ENCODE measurements at regions of chr16 and their contacts with region 1.

Region 1: GRCh38 chr16:46689365-46690280 is at the start of gene ORC6:
- DNase-seq: peak; percentile 94 to 95 (median 94)
- H3K4me3 ChIP-seq: peak within 1 kb of the TSS; percentile 77 to 87 (median 85)
- H3K4me3 Mint-ChIP-seq: no peak within 1 kb of the TSS
- H3K27ac ChIP-seq: peak within 1 kb of the TSS; percentile 94 to 96
- H3K27ac Mint-ChIP-seq: no peak within 1 kb of the TSS
- H3K4me1 ChIP-seq: peaks cover 39 to 47% of the 10 kb centered on the region in 2 donors
- H3K4me1 Mint-ChIP-seq: peaks cover 34% of the 10 kb centered on the region
- H3K27me3 ChIP-seq: no peaks in the 10 kb centered on the region
- H3K27me3 Mint-ChIP-seq: no peaks in the 10 kb centered on the region
- CTCF ChIP-seq: peak; percentile 53
- polyA plus RNA-seq, gene ORC6: 0.21 to 1.5 (median 0.31) TPM

Region 2: GRCh38 chr16:46789499-46790414 is 100.1 kb after region 1 on chr16:
- intact Hi-C with region 1: loop called (anchors 2 to 5 kb)
- DNase-seq: peak; percentile 53 to 70 (median 66)
- H3K4me3 ChIP-seq: peak overlapping the region; percentile 57 to 86 (median 71)
- H3K4me3 Mint-ChIP-seq: peak overlapping the region; percentile 78 to 90
- H3K27ac ChIP-seq: peak overlapping the region; percentile 81 to 82
- H3K27ac Mint-ChIP-seq: peak overlapping the region; percentile 93 to 97 (median 95)
- H3K4me1 ChIP-seq: peaks cover 25 to 35% of the 10 kb centered on the region in 2 donors
- H3K4me1 Mint-ChIP-seq: peaks cover 37% of the 10 kb centered on the region
- H3K27me3 ChIP-seq: no peaks in the 10 kb centered on the region
- H3K27me3 Mint-ChIP-seq: peaks cover 0 to 1% (median 0%) of the 10 kb centered on the region in 3 donors
- CTCF ChIP-seq: no peak